Activated T-helper 1 cell treated with anti-CD3 and anti-CD28 coated beads, Interleukin-12 subunit alpha, Interleukin-12 subunit beta, Interleukin-2, Interleukin-4 antibody, amounts not matched to agents 30 ng/mL and 10 ng/mL and 1 ng/mL, durations not matched to agents 14 hours and 24 hours and 36 hours (primary cell): ENCODE measurements at regions of chr4 and their contacts with region 1.

Region 1: DNA sequence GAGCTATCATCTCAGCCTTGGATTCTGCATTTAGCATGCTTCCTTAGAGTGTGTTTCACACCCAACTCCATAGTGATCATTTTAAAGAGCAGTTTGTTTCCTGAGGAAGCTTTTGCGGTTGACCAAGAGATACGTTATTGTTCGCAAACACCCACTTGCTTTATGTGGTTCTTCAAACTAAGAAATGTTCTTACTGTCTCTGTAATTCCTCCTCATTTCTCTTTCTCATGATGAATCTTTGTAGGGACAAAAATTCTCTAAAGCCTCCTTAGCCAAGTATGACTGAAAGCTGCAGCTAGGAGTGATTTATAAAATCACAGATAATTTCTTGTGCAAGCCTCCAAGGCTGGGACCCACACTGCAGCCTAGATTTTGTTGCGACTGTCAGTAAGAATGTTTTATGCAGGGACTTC is 10.0 kb downstream of the TNIP3 start:
- DNase-seq: peak; percentile 39
- H3K4me3 Mint-ChIP-seq: peak overlapping the region; percentile 56
- H3K27ac Mint-ChIP-seq: peak overlapping the region; percentile 73
- H3K4me1 Mint-ChIP-seq: peaks cover 74% of the 10 kb centered on the region
- H3K27me3 Mint-ChIP-seq: peaks cover 9% of the 10 kb centered on the region

Region 2: DNA sequence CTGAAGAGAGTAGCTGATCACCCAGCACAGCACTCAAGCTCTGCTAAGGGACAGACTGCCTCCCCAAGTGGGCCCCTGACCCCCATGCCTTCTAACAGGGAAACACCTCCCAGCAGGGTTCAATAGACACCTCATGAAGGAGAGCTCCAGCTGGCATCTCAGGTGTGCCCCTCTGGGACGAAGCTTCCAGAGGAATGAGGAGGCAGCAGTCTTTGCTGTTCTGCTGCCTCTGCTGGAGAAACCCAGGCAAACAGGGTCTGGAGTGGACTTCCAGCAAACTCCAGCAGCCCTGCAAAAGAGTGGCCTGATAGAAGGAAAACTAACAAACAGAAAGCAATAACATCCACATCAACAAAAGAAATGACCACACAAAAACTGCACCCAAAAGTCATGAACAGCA is 644.4 kb before region 1 on chr4:
- intact Hi-C with region 1: no loop called
- DNase-seq: no peak
- H3K4me3 Mint-ChIP-seq: no peak overlapping the region
- H3K27ac Mint-ChIP-seq: no peak overlapping the region
- H3K4me1 Mint-ChIP-seq: no peaks in the 10 kb centered on the region
- H3K27me3 Mint-ChIP-seq: peaks cover 2% of the 10 kb centered on the region

Region 3: GRCh38 chr4:120991930-120992329 is 162.2 kb before region 1 on chr4:
- intact Hi-C with region 1: no loop called
- DNase-seq: no peak
- H3K4me3 Mint-ChIP-seq: no peak overlapping the region
- H3K27ac Mint-ChIP-seq: no peak overlapping the region
- H3K4me1 Mint-ChIP-seq: no peaks in the 10 kb centered on the region
- H3K27me3 Mint-ChIP-seq: peaks cover 2% of the 10 kb centered on the region

Region 4: DNA sequence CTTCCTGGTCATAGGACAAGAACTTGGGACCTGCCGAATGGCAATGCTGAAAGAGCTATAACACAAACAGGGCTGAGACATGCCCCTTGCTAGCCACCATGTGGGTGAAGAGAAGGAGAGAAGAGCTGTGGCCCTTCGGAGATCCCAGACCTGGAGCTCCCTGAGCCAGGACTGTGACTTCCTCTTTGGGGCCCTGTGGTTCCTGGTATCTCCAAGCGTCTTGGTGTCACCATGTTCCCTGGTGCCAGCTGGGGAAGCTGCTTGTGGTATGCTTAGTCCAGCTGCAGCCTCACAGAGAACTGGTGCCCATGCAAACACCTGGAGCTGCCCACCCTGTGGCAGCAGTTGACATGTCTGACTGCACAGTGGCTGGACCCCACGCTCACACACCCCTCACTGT is 150.2 kb before region 1 on chr4:
- intact Hi-C with region 1: no loop called
- DNase-seq: no peak
- H3K4me3 Mint-ChIP-seq: no peak overlapping the region
- H3K27ac Mint-ChIP-seq: no peak overlapping the region
- H3K4me1 Mint-ChIP-seq: no peaks in the 10 kb centered on the region
- H3K27me3 Mint-ChIP-seq: no peaks in the 10 kb centered on the region

Region 5: DNA sequence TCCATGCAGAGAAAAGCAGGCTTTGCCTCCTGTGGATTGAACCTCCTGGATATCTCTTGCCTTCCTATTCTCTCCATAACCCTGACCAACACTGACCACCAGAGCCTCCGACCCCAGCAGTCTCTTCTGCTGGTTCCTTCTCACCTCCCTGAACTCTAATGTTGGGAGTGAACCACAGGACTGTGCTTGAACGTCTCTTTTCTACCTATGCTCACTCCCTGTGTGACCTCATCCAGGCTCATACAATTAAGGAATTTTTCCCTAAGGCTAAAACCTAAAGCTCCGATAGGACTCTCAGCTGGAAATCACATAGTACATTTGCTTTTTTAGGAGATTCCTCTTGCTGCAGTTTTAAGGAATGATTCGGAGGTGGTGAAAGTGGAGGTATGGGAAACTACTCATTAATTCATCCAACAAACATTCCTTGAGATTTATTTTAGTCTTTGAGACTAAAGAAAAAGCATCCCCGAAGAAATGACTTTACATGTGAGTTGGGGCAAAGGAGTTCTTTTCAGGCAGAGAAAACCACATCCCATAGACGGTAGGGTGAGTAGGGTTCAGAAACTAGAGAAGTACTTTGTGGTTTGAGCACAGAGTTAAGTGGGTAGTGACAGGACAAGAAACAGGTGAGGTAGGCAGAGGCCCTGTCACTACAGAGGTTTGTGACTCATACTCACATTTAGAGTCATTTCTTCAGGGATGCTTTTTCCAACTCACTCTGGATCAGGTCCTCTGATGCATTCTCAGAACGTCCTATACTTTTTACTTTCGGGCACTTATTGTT is 112.6 kb before region 1 on chr4:
- intact Hi-C with region 1: loop called (anchors 1 kb)
- DNase-seq: peak; percentile 6
- H3K4me3 Mint-ChIP-seq: no peak overlapping the region
- H3K27ac Mint-ChIP-seq: peak overlapping the region; percentile 21
- H3K4me1 Mint-ChIP-seq: peaks cover 16% of the 10 kb centered on the region
- H3K27me3 Mint-ChIP-seq: peaks cover 41% of the 10 kb centered on the region

Region 6: GRCh38 chr4:121166976-121167375 is 12.9 kb after region 1 on chr4:
- intact Hi-C with region 1: loop called (anchors 1 kb)
- DNase-seq: no peak
- H3K4me3 Mint-ChIP-seq: no peak overlapping the region
- H3K27ac Mint-ChIP-seq: no peak overlapping the region
- H3K4me1 Mint-ChIP-seq: peaks cover 44% of the 10 kb centered on the region
- H3K27me3 Mint-ChIP-seq: peaks cover under 1% of the 10 kb centered on the region

Region 7: GRCh38 chr4:121243485-121243884 is 89.4 kb after region 1 on chr4:
- intact Hi-C with region 1: loop called (anchors 5 kb)
- DNase-seq: no peak
- H3K4me3 Mint-ChIP-seq: peak overlapping the region; percentile 8
- H3K27ac Mint-ChIP-seq: peak overlapping the region; percentile 25
- H3K4me1 Mint-ChIP-seq: peaks cover 20% of the 10 kb centered on the region
- H3K27me3 Mint-ChIP-seq: no peaks in the 10 kb centered on the region

Region 8: GRCh38 chr4:121353213-121353612 is 199.1 kb after region 1 on chr4:
- intact Hi-C with region 1: no loop called
- DNase-seq: no peak
- H3K4me3 Mint-ChIP-seq: no peak overlapping the region
- H3K27ac Mint-ChIP-seq: no peak overlapping the region
- H3K4me1 Mint-ChIP-seq: no peaks in the 10 kb centered on the region
- H3K27me3 Mint-ChIP-seq: peaks cover 16% of the 10 kb centered on the region

Region 9: GRCh38 chr4:121711263-121712000 is 557.3 kb after region 1 on chr4:
- intact Hi-C with region 1: loop called (anchors 5 kb)
- DNase-seq: peak; percentile 10
- H3K4me3 Mint-ChIP-seq: peak overlapping the region; percentile 45
- H3K27ac Mint-ChIP-seq: no peak overlapping the region
- H3K4me1 Mint-ChIP-seq: peaks cover 51% of the 10 kb centered on the region
- H3K27me3 Mint-ChIP-seq: peaks cover 24% of the 10 kb centered on the region